GM12878 (cell line): ENCODE measurements at regions of chr2 and their contacts with region 1.

Region 1: DNA sequence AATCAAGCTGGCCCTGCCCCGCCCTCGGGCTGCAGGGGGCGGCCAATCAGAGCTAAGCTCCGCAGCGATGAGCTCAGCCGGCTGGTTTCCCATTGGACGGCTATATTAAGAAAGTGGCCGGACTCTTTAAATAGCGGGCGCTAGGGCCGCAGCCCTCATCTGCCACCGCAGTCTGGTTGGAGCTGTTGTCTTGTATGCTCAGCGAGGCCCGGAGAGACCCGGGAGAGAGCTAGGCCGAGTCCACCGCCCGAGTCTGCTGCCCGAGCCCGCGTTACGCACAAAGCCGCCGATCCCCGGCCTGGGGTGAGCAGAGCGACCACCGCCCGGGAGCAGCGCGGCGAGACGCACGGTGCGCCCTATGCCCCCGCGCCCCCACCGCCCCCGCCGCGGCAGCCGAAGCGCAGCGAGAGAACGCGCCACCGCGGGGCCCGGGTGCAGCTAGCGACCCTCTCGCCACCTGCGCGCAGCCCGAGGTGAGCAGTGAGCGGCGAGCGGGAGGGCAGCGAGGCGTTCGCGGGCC is at the start of gene RHOB:
- DNase-seq: peak; percentile 74
- ATAC-seq: peak; percentile 98
- H3K4me3 ChIP-seq: peak within 1 kb of the TSS; percentile 60; the same call in 1 of the 2 replicates
- H3K27ac ChIP-seq: no peak within 1 kb of the TSS
- H3K4me1 ChIP-seq: peaks cover 3% of the 10 kb centered on the region
- H3K27me3 ChIP-seq: peaks cover 5 to 9% of the 10 kb centered on the region in 2 experiments; a peak in 3 of 4 replicates
- CTCF ChIP-seq: no peak
- EP300 ChIP-seq: no peak
- POLR2A ChIP-seq: peak; percentile 98
- RAD21 ChIP-seq: 0 out of 2 replicates have a peak, but pooled peaks have one; percentile 11
- polyA plus RNA-seq, gene RHOB: 0.03 to 0.35 TPM

Region 2: DNA sequence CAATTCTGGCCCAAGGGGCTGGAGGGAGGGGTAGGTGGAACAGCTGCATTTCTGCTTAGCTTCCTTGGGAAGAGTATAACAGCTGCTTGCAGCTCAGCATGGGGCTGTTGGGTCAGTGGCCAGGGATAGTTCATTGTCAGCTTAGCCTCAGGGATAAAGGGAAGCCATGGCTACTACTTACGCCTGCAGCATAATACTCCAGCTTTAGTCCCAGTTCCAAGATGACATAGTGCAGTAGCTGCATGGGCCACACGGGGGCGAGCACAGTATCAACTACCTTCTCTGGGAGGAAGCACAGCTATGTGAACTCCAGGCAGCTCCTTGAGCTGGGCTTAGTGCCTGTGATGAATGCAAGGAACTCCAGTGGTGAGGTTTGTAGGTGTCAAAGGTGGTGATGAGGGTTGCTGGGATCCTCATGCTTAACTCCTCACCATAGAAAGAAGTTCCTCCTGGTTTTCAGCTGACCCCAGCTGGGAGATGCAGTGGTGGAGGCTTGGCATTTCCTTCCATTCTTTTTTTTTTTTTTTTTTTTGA is 35.5 kb before region 1 on chr2:
- CTCF ChIA-PET with region 1: interaction called, 73 read pairs
- POLR2A ChIA-PET with region 1: interaction called, 8 read pairs
- RAD21 ChIA-PET with region 1: interaction called, 7 read pairs
- SMC1A ChIA-PET with region 1: interaction called, 39 read pairs
- in situ Hi-C with region 1: no loop called
- intact Hi-C with region 1: no loop called
- DNase-seq: no peak
- ATAC-seq: peak; percentile 100
- H3K4me3 ChIP-seq: no peak overlapping the region
- H3K27ac ChIP-seq: no peak overlapping the region
- H3K4me1 ChIP-seq: no peaks in the 10 kb centered on the region
- H3K27me3 ChIP-seq: no peaks in the 10 kb centered on the region
- CTCF ChIP-seq: peak; percentile 84 to 94 (median 92)
- EP300 ChIP-seq: no peak
- POLR2A ChIP-seq: no peak
- RAD21 ChIP-seq: peak; percentile 80

Region 3: DNA sequence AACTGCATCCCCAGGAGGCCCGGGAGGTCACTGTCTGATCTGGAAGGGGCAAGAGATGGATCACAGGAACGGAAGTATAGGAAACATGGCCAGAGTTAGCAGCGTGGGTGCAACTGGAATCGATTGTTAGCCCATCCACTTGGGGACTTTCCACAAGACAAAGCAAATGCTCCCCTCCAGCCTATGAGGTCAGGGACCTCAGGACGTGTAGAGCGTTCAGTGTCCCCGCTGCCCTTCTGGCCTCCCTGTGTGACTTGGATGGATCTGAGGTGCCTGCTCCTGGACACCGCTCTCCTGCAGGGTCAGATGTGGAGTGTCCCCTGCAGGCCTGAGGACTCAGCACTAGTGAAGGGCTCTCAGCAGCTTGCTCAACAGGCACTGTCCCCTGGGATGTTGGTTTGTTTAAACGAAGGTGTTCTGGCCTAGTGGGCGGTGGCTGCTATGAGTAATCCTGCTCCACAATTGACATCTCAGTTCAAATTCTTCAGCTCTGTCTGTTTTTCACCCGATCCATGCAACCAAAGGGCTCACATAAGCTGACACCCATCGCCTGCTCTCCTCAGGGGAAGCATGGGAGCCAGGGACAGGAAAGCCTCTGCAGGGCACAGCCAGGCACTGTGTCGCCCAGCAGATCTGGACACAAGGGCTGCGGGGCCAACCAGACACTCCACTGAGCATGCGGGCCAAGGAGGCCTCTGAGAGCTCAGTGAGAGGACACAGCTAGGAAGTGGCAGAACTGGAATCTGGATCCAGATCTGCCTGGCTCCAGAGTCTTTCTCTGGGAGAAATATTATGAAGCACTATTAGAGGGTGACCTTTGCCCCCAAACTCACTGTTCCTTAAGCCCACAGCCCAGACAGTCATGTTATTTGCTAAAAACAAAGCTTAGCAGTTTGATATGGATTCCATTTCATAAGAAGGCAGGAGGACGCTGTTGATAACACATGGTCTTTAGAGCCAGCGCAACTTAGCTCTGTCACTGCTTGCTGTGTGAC is 78.4 kb after region 1 on chr2:
- CTCF ChIA-PET with region 1: interaction called, 8 read pairs
- POLR2A ChIA-PET with region 1: interaction called, 16 read pairs
- RAD21 ChIA-PET with region 1: interaction called, 42 read pairs
- SMC1A ChIA-PET with region 1: interaction called, 17 read pairs
- in situ Hi-C with region 1: no loop called
- intact Hi-C with region 1: loop called (anchors 5 kb)
- DNase-seq: peak; percentile 76
- ATAC-seq: peak; percentile 95
- H3K4me3 ChIP-seq: no peak overlapping the region
- H3K27ac ChIP-seq: peak overlapping the region; percentile 64
- H3K4me1 ChIP-seq: peaks cover 18% of the 10 kb centered on the region
- H3K27me3 ChIP-seq: no peaks in the 10 kb centered on the region
- CTCF ChIP-seq: peak in 1 of 3 experiments; percentile 37; a peak in 1 of 6 replicates
- EP300 ChIP-seq: peak; percentile 25 to 62; a peak in 2 of 4 replicates
- POLR2A ChIP-seq: 0 out of 2 replicates have a peak, but pooled peaks have one; percentile 49
- RAD21 ChIP-seq: no peak

Region 4: GRCh38 chr2:20614201-20615038 is 167.4 kb after region 1 on chr2:
- CTCF ChIA-PET with region 1: interaction called, 6 read pairs
- POLR2A ChIA-PET with region 1: interaction called, 3 read pairs
- RAD21 ChIA-PET with region 1: interaction called, 11 read pairs
- SMC1A ChIA-PET with region 1: interaction called, 4 read pairs
- in situ Hi-C with region 1: no loop called
- intact Hi-C with region 1: no loop called
- DNase-seq: no peak
- ATAC-seq: peak; percentile 51; the same call in 2 of the 3 replicates
- H3K4me3 ChIP-seq: no peak overlapping the region
- H3K27ac ChIP-seq: no peak overlapping the region
- H3K4me1 ChIP-seq: no peaks in the 10 kb centered on the region
- H3K27me3 ChIP-seq: no peaks in the 10 kb centered on the region
- CTCF ChIP-seq: no peak
- EP300 ChIP-seq: no peak
- POLR2A ChIP-seq: no peak
- RAD21 ChIP-seq: no peak

Region 5: GRCh38 chr2:20650880-20651730 is 204.1 kb after region 1 on chr2 and contains the start of gene HS1BP3:
- CTCF ChIA-PET with region 1: interaction called, 44 read pairs
- POLR2A ChIA-PET with region 1: interaction called, 6 read pairs
- RAD21 ChIA-PET with region 1: interaction called, 24 read pairs
- SMC1A ChIA-PET with region 1: interaction called, 22 read pairs
- in situ Hi-C with region 1: no loop called
- intact Hi-C with region 1: no loop called
- DNase-seq: peak; percentile 43
- ATAC-seq: peak; percentile 98
- H3K4me3 ChIP-seq: peak within 1 kb of the TSS; percentile 96
- H3K27ac ChIP-seq: no peak within 1 kb of the TSS; the same call in 1 of the 2 replicates
- H3K4me1 ChIP-seq: peaks cover 4% of the 10 kb centered on the region
- H3K27me3 ChIP-seq: peaks cover 0 to 1% of the 10 kb centered on the region in 2 experiments; a peak in 1 of 4 replicates
- CTCF ChIP-seq: peak; percentile 72 to 97 (median 91); a peak in 4 of 6 replicates
- EP300 ChIP-seq: no peak
- POLR2A ChIP-seq: peak; percentile 89
- RAD21 ChIP-seq: peak; percentile 68
- polyA plus RNA-seq, gene HS1BP3: 0.47 to 0.57 TPM

Region 6: GRCh38 chr2:20962939-20963557 is 516.1 kb after region 1 on chr2:
- CTCF ChIA-PET with region 1: no interaction called
- POLR2A ChIA-PET with region 1: no interaction called
- RAD21 ChIA-PET with region 1: no interaction called
- SMC1A ChIA-PET with region 1: no interaction called
- in situ Hi-C with region 1: loop called (anchors 25 kb)
- intact Hi-C with region 1: no loop called
- DNase-seq: no peak
- ATAC-seq: peak; percentile 91
- H3K4me3 ChIP-seq: no peak overlapping the region
- H3K27ac ChIP-seq: no peak overlapping the region
- H3K4me1 ChIP-seq: no peaks in the 10 kb centered on the region
- H3K27me3 ChIP-seq: no peaks in the 10 kb centered on the region; a peak in 1 of 4 replicates
- CTCF ChIP-seq: peak; percentile 81 to 84 (median 82)
- EP300 ChIP-seq: no peak
- POLR2A ChIP-seq: no peak
- RAD21 ChIP-seq: peak; percentile 86